Pancreas (tissue), 10 donors: ENCODE measurements at regions of chr17 and their contacts with region 1.

Region 1: GRCh38 chr17:19362277-19363113 is at the start of gene B9D1:
- DNase-seq: peak; percentile 91 to 99 (median 98)
- ATAC-seq: peak; percentile 95 to 98 (median 97)
- H3K4me3 ChIP-seq: peak within 1 kb of the TSS; percentile 51 to 93 (median 80)
- H3K27ac ChIP-seq: peak within 1 kb of the TSS; percentile 81 to 88 (median 86)
- H3K4me1 ChIP-seq: peaks cover 0 to 5% (median 0%) of the 10 kb centered on the region in 3 donors
- H3K27me3 ChIP-seq: no peaks in the 10 kb centered on the region
- CTCF ChIP-seq: peak; percentile 92 to 98 (median 96)
- total RNA-seq, gene B9D1: 6.6 to 13.2 (median 10.6) TPM

Region 2: GRCh38 chr17:19418251-19418992 is 55.9 kb after region 1 on chr17:
- intact Hi-C with region 1: loop called in 1 of 3 experiments (anchors 10 kb)
- DNase-seq: peak in 1 of 6 donors; percentile 21
- ATAC-seq: peak in 2 of 4 donors; percentile 12 to 28
- H3K4me3 ChIP-seq: no peak overlapping the region
- H3K27ac ChIP-seq: no peak overlapping the region
- H3K4me1 ChIP-seq: no peaks in the 10 kb centered on the region
- H3K27me3 ChIP-seq: no peaks in the 10 kb centered on the region
- CTCF ChIP-seq: no peak

Region 3: GRCh38 chr17:19447085-19447583 is 84.6 kb after region 1 on chr17:
- intact Hi-C with region 1: loop called (anchors 5 to 10 kb)
- DNase-seq: peak in 4 of 6 donors; percentile 34 to 79 (median 54)
- ATAC-seq: peak; percentile 61 to 93 (median 88)
- H3K4me3 ChIP-seq: no peak overlapping the region
- H3K27ac ChIP-seq: no peak overlapping the region
- H3K4me1 ChIP-seq: peaks cover 0 to 9% (median 5%) of the 10 kb centered on the region in 3 donors
- H3K27me3 ChIP-seq: no peaks in the 10 kb centered on the region
- CTCF ChIP-seq: peak; percentile 89 to 93 (median 91)